ENCODE measurements at regions of chr12 and their contacts with region 1.

Region 1: DNA sequence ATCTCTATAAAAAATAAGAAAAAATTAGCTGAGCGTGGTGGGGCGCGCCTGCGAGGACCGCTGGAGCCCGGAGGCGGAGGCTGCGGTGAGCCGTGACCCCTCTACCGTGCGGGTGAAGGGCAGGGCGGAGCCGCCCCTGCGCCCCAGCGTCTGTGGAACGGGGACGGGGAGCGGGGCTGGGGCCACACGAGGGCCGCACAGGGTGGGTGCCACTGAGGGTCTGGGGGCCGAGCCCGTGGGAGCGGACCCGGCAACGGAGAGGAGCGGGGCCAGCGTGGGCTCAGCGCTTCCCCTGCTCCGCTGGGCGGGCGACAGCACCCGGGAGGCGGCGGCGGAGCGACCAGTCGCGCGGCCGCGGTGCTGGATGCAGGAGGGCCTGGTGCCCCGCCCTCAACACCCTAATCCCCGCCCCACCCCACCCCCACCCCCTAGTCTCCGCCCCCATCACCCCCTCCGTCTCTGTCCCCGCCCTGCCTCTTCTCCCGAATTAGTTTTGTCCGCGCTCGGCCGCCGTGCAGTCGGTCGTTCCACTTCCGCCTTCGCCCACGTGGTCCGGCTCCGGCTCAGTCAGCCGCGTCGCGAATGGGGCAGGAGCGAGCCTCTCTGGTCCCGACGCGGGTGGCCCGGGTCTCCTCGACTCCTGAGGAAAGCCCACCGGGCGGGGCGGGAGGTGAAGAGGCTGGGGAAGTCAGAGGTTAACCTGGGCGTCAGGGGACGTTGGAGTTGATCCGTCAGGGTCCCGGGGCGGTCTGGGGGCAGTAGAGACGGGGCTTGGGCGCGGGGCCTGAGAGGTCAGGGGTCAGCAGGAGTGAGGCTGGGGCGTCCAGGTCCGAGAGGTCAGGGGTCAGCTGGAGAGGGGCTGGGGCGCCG is at the start of gene PUS1:
- DNase-seq: peak; percentile 95 to 97
- ATAC-seq: peak; percentile 90 to 96 (median 95)
- H3K4me3 ChIP-seq: peak within 1 kb of the TSS; percentile 52 to 98 (median 80)
- H3K27ac ChIP-seq: peak within 1 kb of the TSS; percentile 88 to 96 (median 92)
- H3K4me1 ChIP-seq: peaks cover 5 to 34% (median 21%) of the 10 kb centered on the region in 9 donors
- H3K27me3 ChIP-seq: no peaks in the 10 kb centered on the region
- CTCF ChIP-seq: peak in 2 of 9 donors; percentile 14 to 24
- total RNA-seq, gene PUS1: 5.1 to 14.8 (median 7.5) TPM

Region 2: DNA sequence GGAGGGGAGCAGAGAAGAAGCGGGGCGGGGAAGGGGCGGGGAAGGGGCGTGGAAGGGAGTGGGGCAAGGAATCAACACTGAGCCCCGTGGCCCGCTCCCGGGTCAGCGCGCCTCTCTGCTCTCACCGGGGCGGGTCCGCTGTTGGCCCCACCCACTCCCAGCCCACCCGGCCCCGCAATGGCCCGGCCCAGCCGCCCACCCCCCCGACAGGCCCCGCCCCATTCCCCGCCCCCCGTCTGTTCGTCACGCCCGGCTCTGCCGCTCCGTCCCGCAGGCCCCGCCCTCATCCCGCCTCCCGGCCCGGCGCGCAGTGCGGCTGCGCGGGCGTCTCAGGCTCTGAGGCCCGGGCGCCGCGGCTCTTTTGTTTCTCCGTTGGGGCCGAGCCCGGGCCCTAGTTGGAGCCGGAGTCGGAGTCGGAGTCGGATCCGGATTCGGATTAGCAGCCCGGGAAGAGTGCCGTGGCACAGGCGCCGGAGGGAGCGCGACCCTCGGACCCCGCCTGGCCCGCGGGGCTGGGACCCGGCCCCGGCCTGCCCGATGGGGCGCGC is 34.6 kb before region 1 on chr12 and contains the start of gene ULK1:
- intact Hi-C with region 1: loop called in 6 of 10 experiments (anchors 1 to 5 kb)
- DNase-seq: peak; percentile 92 to 96
- ATAC-seq: peak; percentile 68 to 80 (median 76)
- H3K4me3 ChIP-seq: peak within 1 kb of the TSS; percentile 40 to 85 (median 64)
- H3K27ac ChIP-seq: peak within 1 kb of the TSS; percentile 94 to 99 (median 98)
- H3K4me1 ChIP-seq: peaks cover 8 to 35% (median 24%) of the 10 kb centered on the region in 9 donors
- H3K27me3 ChIP-seq: no peaks in the 10 kb centered on the region
- CTCF ChIP-seq: no peak
- total RNA-seq, gene ULK1: 30.2 to 77.7 (median 51.6) TPM

Region 3: GRCh38 chr12:131980260-131980659 is 51.3 kb after region 1 on chr12:
- intact Hi-C with region 1: no loop called
- DNase-seq: no peak
- ATAC-seq: no peak
- H3K4me3 ChIP-seq: no peak overlapping the region
- H3K27ac ChIP-seq: no peak overlapping the region
- H3K4me1 ChIP-seq: peaks cover 0 to 11% (median 0%) of the 10 kb centered on the region in 9 donors
- H3K27me3 ChIP-seq: no peaks in the 10 kb centered on the region
- CTCF ChIP-seq: no peak